ENCODE measurements at regions of chr2 and their contacts with region 1.

Region 1: DNA sequence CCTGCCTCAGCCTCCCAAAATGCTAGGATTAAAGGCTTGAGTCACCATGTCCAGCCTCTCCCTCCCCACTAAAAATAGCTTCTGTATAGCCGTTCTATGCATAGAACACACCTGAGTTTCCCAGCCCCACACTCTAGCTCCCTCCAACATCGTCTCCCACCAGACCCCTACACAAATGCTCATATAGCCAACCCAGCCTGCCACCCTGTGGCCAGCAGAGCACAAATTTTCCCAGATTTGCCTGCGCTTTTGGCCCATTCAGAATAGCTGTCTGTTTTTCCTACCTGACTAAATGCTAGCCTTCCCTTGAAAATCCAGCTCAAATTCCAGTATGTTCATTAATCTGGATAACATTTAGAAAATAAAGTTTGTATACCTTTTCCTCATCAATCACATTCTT is 22.8 kb downstream of the TRABD2A start:
- DNase-seq: peak; percentile 33
- H3K4me3 ChIP-seq: no peak overlapping the region
- H3K27ac ChIP-seq: no peak overlapping the region
- H3K4me1 ChIP-seq: no peaks in the 10 kb centered on the region
- CTCF ChIP-seq: peak; percentile 77

Region 2: DNA sequence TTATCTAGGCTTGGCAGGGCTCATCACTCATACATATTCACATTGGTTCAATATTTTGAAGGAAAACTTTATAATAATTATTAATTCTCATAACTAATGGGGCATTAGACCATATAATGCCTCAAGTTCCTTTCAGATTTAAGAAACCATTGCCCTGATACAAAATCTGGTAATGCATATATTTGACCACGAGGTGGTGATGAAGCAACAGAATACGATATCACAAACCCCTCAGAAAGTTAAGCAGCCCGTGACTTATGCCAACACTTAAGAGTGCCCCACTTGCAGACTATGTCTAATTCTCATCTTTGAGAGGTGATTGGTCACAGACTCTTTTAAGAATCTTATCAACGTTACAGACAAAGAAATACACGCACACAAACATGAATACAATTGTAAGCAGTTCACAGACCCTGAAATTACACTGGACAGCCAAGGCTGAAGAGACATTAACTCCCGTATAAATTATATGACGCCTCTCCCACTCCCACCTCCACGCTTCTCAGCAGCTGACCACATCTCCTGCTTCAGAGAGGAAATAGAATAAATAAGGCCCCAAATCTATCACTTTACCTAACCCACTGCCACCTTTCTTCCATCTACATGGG is 362.5 kb before region 1 on chr2:
- CTCF ChIA-PET with region 1: no interaction called
- POLR2A ChIA-PET with region 1: no interaction called
- intact Hi-C with region 1: loop called (anchors 1 kb)
- DNase-seq: peak; percentile 69
- H3K4me3 ChIP-seq: no peak overlapping the region
- H3K27ac ChIP-seq: no peak overlapping the region
- H3K4me1 ChIP-seq: no peaks in the 10 kb centered on the region
- CTCF ChIP-seq: peak; percentile 87

Region 3: GRCh38 chr2:84741296-84741765 is 116.8 kb before region 1 on chr2:
- CTCF ChIA-PET with region 1: no interaction called
- POLR2A ChIA-PET with region 1: no interaction called
- intact Hi-C with region 1: loop called (anchors 1 kb)
- DNase-seq: peak; percentile 50
- H3K4me3 ChIP-seq: no peak overlapping the region
- H3K27ac ChIP-seq: no peak overlapping the region
- H3K4me1 ChIP-seq: no peaks in the 10 kb centered on the region
- CTCF ChIP-seq: peak; percentile 69

Measured in OCI-LY7 (cell line).